Transverse colon (tissue), 4 donors: ENCODE measurements at regions of chr4 and their contacts with region 1.

Region 1: GRCh38 chr4:22196551-22196950 is 248.0 kb upstream of the KCNIP4 start:
- DNase-seq: no peak
- H3K4me3 ChIP-seq: no peak overlapping the region
- H3K27ac ChIP-seq: no peak overlapping the region
- H3K4me1 ChIP-seq: no peaks in the 10 kb centered on the region
- H3K27me3 ChIP-seq: no peaks in the 10 kb centered on the region
- CTCF ChIP-seq: no peak
- EP300 ChIP-seq: no peak
- POLR2A ChIP-seq: no peak

Region 2: DNA sequence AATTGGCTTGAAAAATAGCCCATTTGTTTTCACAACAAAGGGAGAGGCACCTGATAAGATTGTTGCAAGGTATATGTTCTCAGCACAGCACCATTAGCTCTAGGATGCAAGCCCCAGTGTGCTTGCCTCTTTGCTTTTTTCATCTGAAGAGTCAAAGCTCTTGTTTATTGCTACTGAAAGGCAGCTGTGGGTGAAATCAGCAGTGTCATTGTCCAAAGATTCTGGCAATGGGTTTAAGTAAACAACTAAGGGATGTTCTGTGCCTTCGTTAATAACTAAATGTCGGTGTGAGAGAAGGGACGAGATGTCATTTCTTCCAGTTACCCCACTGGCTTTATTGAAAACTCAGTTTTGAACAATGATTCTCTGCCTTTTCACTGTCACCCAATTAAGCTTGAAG is 815.7 kb before region 1 on chr4:
- in situ Hi-C with region 1: no loop called
- intact Hi-C with region 1: loop called (anchors 5 kb)
- DNase-seq: no peak
- H3K4me3 ChIP-seq: no peak overlapping the region
- H3K27ac ChIP-seq: no peak overlapping the region
- H3K4me1 ChIP-seq: no peaks in the 10 kb centered on the region
- H3K27me3 ChIP-seq: no peaks in the 10 kb centered on the region
- CTCF ChIP-seq: no peak
- EP300 ChIP-seq: no peak
- POLR2A ChIP-seq: no peak

Region 3: GRCh38 chr4:21811565-21811964 is 385.0 kb before region 1 on chr4:
- in situ Hi-C with region 1: no loop called
- intact Hi-C with region 1: no loop called
- DNase-seq: no peak
- H3K4me3 ChIP-seq: no peak overlapping the region
- H3K27ac ChIP-seq: no peak overlapping the region
- H3K4me1 ChIP-seq: no peaks in the 10 kb centered on the region
- H3K27me3 ChIP-seq: no peaks in the 10 kb centered on the region
- CTCF ChIP-seq: no peak
- EP300 ChIP-seq: no peak
- POLR2A ChIP-seq: no peak